ENCODE measurements at regions of chr17 and their contacts with region 1.

Region 1: GRCh38 chr17:9729034-9729650 is 62.2 kb downstream of the DHRS7C start:
- H3K4me3 ChIP-seq: no peak overlapping the region
- H3K27ac ChIP-seq: no peak overlapping the region
- H3K4me1 ChIP-seq: no peaks in the 10 kb centered on the region
- CTCF ChIP-seq: peak; percentile 63

Region 2: GRCh38 chr17:9598676-9599075 is 130.5 kb before region 1 on chr17:
- CTCF ChIA-PET with region 1: no interaction called
- POLR2A ChIA-PET with region 1: no interaction called
- H3K4me3 ChIP-seq: no peak overlapping the region
- H3K27ac ChIP-seq: no peak overlapping the region
- H3K4me1 ChIP-seq: no peaks in the 10 kb centered on the region
- CTCF ChIP-seq: no peak

Region 3: GRCh38 chr17:9714801-9715200 is 14.3 kb before region 1 on chr17:
- CTCF ChIA-PET with region 1: interaction called, 30 read pairs
- POLR2A ChIA-PET with region 1: no interaction called
- H3K4me3 ChIP-seq: no peak overlapping the region
- H3K27ac ChIP-seq: no peak overlapping the region
- H3K4me1 ChIP-seq: no peaks in the 10 kb centered on the region
- CTCF ChIP-seq: no peak

Region 4: DNA sequence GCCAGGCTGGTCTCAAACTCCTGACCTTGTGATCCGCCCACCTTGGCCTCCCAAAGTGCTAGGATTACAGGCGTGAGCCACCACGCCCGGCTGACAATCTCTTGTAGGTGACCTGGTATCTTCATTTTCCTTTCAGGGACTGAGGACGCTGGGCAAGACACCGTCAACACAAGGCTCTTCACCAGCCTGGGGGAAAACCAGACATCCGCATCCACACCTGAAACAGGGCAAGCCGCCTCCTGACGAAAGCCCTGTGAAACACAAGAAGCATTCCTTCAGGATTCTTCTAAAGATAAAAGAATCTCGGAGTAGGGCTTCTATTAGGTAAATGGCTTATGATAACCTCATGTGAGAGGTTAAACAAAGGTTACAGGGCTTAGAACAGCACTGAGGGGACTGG is 14.0 kb after region 1 on chr17:
- CTCF ChIA-PET with region 1: interaction called, 29 read pairs
- POLR2A ChIA-PET with region 1: no interaction called
- H3K4me3 ChIP-seq: no peak overlapping the region
- H3K27ac ChIP-seq: no peak overlapping the region
- H3K4me1 ChIP-seq: no peaks in the 10 kb centered on the region
- CTCF ChIP-seq: no peak

Measured in HEK293 (cell line).